Sciatic nerve (tissue), 2 donors: ENCODE measurements at regions of chr7 and their contacts with region 1.

Region 1: GRCh38 chr7:30168835-30169573 is 34.2 kb downstream of the MTURN start:
- DNase-seq: no peak
- ATAC-seq: no peak

Region 2: DNA sequence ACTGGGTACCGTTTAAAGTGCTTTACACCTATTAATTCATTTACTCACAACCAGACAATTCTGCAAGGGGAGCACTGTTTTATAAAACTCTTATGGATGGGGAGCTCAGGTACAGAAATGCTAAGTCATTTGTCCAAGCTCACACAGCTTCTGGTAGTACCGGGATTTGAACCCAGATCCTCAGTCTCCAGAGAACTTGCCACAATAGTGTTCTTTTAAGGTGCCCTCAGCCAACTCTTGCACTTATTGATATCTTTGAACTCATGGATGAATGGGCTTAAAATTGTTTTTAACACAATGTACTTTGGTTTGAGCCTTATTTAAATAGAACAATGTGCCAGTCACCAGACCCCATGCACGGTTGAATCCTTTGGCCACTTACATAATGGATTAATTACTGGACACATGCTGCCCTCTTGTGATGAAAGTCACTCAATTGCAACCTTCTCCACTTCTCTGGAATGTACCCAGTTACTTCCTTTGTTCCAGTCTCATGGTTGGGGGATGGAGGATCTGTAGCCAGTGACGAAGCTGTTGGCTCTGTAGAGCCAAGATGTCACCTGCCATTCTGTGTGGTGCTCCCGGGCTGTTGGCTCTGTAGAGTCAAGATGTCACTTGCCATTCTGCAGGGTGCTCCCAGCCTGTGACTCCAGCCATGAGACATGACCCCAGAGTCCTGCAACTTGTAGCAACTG is 244.0 kb after region 1 on chr7:
- intact Hi-C with region 1: loop called (anchors 5 kb)
- DNase-seq: no peak
- ATAC-seq: peak; percentile 91